ENCODE measurements at regions of chr17 and their contacts with region 1.

Region 1: GRCh38 chr17:8118769-8119580 is 661 bp upstream of the ALOXE3 start:
- DNase-seq: peak; percentile 94
- ATAC-seq: peak; percentile 58
- H3K4me3 Mint-ChIP-seq: peak overlapping the region; percentile 90
- H3K27ac Mint-ChIP-seq: peak overlapping the region; percentile 94
- H3K4me1 Mint-ChIP-seq: peaks cover 46% of the 10 kb centered on the region
- H3K27me3 Mint-ChIP-seq: peaks cover 29% of the 10 kb centered on the region

Region 2: DNA sequence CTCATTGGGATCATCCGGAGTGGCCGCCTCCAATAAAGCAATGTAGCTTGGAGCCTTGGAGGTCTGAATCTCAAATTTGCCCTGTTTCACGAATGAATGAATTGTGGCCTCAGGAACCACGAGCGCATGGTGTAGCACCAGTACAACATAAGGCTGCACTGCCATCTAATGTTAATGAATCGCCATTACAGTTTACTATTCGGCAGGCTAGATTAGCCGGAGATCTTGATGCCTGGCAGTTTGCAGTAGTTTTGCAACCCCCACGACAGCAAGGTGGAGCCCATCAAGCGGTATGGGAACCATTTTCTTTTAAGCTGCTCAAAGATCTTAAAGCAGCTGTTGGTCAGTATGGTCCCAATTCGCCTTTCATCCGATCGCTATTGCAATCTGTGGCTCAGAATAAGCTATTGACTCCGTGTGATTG is 61.3 kb before region 1 on chr17:
- CTCF ChIA-PET with region 1: interaction called, 108 read pairs
- POLR2A ChIA-PET with region 1: no interaction called
- intact Hi-C with region 1: loop called (anchors 1 to 2 kb)
- DNase-seq: peak; percentile 63
- ATAC-seq: peak; percentile 89
- H3K4me3 Mint-ChIP-seq: no peak overlapping the region
- H3K27ac Mint-ChIP-seq: no peak overlapping the region
- H3K4me1 Mint-ChIP-seq: peaks cover 4% of the 10 kb centered on the region
- H3K27me3 Mint-ChIP-seq: peaks cover 47% of the 10 kb centered on the region

Region 3: DNA sequence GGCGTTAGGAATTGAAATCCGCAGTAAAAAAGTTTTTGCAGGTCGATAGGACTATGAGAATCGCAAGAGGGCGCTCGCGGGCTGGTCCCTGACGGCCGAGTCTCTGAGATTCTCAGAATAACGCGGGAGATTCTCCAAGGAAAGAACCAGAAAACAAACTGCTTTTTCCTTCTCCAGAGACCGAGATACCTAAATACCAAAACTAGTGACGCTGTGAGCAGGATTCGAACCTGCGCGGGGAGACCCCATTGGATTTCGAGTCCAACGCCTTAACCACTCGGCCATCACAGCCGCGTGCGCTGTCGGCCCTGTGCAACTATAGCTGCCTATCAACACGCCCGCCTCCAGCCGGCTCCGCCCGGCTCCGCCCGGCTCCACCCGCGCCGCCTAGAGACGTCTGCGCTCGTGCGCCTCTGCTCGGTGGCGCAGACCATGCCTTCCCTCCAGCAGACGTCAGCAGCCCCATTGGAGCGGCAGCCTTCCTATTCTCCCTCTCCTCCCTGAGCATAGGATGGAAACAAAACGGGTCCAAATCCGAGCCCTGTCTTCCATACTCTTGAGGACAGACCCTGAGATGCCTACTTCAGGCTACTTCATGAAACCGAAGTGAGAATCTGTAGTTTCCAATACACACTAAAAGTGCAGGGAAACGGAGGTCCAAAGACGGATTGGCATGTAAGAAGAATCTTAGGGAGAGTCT is 19.8 kb after region 1 on chr17:
- CTCF ChIA-PET with region 1: interaction called, 60 read pairs
- POLR2A ChIA-PET with region 1: interaction called, 15 read pairs
- intact Hi-C with region 1: loop called (anchors 1 kb)
- DNase-seq: peak; percentile 98
- ATAC-seq: peak; percentile 90
- H3K4me3 Mint-ChIP-seq: no peak overlapping the region
- H3K27ac Mint-ChIP-seq: no peak overlapping the region
- H3K4me1 Mint-ChIP-seq: no peaks in the 10 kb centered on the region
- H3K27me3 Mint-ChIP-seq: no peaks in the 10 kb centered on the region

Region 4: DNA sequence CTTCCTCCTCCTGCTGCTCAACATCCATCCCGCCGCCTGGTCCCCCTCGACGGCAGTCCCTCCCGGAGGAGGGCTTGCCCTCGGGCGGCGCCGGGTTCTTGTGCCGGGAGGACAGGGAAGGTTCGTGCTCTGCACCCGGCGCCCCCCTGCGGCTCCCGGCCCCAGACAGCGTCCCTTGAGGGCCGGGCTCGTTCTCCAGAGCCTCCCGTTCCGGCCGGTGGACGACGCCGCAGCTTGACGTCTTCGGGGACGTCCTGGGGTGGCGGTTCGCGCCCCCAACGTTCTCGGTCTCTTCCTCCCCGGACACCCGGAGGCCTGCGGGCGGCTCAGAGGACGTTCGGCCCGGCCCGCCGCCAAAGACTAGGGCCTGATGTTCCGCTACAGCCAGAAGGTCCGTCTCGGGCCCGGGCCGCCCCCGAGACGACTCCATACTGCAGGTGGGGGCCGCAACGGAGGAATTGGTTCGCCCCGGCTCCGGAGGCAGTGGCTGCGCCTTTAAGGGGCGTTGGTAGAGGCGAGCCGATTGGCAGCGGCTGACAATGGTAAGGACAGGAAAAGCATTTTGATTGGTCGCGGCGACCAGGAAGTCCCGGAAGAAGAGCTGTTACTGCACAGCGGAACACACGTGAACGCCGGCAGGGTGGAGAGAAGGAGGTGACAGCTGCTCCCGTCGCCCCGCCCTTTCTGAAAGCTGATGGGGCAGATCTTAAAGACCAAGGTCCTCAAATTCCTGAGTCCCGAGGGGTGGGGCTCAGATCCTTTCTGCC is 70.9 kb after region 1 on chr17 and contains the start of gene BORCS6:
- CTCF ChIA-PET with region 1: interaction called, 59 read pairs
- POLR2A ChIA-PET with region 1: interaction called, 13 read pairs
- intact Hi-C with region 1: loop called (anchors 1 kb)
- DNase-seq: peak; percentile 98
- ATAC-seq: peak; percentile 67
- H3K4me3 Mint-ChIP-seq: no peak within 1 kb of the TSS
- H3K27ac Mint-ChIP-seq: peak within 1 kb of the TSS; percentile 86
- H3K4me1 Mint-ChIP-seq: peaks cover 10% of the 10 kb centered on the region
- H3K27me3 Mint-ChIP-seq: no peaks in the 10 kb centered on the region
- total RNA-seq, gene BORCS6: 3.9 to 4.5 TPM

Region 5: DNA sequence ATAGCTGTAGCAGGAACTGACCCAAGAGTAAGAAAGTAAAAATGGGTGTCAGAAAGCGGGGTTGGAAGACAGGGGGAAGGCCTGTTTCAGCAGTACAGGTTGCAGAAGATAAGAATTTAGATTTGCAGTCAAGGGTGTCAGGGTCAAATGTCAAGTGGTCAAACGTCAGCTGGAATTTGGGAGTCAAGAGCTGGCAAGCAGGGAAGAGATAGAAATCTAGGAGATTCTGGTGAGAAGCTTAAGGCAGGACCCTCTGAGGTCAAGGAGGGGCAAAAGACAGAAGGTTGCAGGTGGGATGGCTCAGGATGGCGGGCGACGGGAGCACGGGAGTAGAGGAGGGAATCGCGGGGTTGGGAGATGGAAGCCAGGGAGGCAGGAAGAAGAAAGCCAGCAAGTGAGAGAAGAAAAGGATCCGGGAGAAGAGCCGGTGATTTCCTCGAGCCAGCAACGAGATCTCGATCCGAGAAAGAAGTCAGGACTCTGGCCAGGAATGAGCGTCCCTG is 175.9 kb after region 1 on chr17:
- CTCF ChIA-PET with region 1: interaction called, 12 read pairs
- POLR2A ChIA-PET with region 1: no interaction called
- intact Hi-C with region 1: loop called in 1 of 2 experiments (anchors 2 kb)
- DNase-seq: no peak
- ATAC-seq: no peak
- H3K4me3 Mint-ChIP-seq: peak overlapping the region; percentile 76
- H3K27ac Mint-ChIP-seq: peak overlapping the region; percentile 90
- H3K4me1 Mint-ChIP-seq: peaks cover 17% of the 10 kb centered on the region
- H3K27me3 Mint-ChIP-seq: no peaks in the 10 kb centered on the region

Measured in activated CD4-positive, alpha-beta T cell treated with anti-CD3 and anti-CD28 coated beads for 36 hours (primary cell).